ENCODE measurements at regions of chr16 and their contacts with region 1.

Region 1: DNA sequence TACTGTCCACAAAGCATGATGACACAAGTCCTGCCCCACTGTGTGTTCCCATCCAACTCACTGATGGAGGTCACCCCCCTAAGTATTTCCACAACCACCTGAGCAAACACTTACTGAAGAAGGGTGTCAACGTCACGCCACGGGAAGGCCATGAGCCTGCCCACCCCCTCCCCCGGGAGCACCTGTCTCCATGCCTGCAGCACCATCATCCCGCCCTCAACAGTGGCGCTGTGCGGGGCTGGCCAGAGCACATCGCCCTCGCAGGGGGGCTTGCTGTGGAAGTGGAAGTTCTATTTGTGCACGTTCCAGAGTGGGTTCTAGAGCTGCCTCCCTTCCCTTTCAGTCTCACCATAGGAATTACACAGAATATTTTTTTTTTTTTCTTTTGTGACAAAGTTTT is 4.3 kb upstream of the MBTPS1 start:
- DNase-seq: no peak
- ATAC-seq: no peak
- H3K4me3 ChIP-seq: no peak overlapping the region
- H3K27ac ChIP-seq: no peak overlapping the region
- H3K4me1 ChIP-seq: peaks cover 4% of the 10 kb centered on the region
- H3K27me3 ChIP-seq: no peaks in the 10 kb centered on the region
- CTCF ChIP-seq: no peak

Region 2: DNA sequence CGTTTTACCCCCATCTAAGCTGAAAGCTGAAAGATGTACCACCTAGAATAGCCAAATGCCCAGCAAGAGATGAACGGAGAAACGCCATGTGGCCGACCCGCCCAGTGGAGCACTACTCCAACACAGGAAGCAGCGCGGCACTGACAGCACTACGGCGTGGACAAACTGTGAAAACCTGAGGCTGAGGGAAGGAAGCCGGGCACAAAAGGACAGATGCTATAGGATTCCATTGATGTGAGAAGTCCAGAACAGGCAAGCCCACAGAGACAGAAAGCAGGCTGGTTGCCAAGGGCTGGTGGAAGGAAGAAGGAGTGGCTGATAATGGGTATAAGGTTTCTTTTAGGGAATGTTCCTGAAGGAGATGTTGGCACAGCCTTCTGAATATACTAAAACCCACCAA is 49.0 kb before region 1 on chr16:
- intact Hi-C with region 1: no loop called
- DNase-seq: no peak
- ATAC-seq: peak in 1 of 4 donors; percentile 18
- H3K4me3 ChIP-seq: no peak overlapping the region
- H3K27ac ChIP-seq: no peak overlapping the region
- H3K4me1 ChIP-seq: no peaks in the 10 kb centered on the region
- H3K27me3 ChIP-seq: no peaks in the 10 kb centered on the region
- CTCF ChIP-seq: no peak

Region 3: DNA sequence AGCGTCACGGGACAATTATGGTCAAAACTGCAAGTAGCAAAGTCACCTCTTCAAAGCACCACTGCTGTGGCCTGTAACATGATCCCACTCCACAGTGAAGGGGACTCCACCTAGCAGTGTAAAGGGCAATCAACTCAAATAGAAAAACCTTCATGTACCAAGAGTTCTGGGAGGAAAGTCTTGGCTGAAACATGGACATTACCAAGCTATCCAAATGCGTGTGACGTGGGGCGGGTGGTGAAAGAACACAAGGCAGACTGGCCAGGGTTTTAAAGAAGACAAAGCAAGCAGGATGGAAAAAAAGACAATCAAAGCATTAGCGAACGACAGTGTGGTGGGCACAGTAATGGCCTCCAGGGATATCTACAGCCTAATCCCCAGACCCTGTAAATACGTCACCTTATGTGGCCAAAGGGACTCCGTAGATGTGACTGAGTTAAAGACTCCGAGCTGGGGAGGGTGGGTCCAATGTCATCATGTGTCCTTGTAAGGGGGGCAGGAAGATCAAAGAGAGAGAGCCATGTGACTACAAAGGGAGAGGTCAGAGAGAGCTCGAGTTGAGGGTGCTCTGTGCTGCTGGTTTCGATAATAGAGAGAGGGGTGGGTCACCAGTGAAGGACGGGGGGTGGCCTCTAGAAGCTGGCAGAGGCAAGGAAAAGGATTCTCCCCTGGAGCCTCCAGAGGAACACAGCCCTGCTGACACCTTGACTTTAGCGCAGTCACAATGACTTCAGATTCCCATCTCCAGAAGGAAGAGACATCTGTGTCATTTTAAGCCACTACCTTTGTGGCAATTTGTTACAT is 18.0 kb after region 1 on chr16:
- intact Hi-C with region 1: loop called in 1 of 2 experiments (anchors 2 kb)
- DNase-seq: peak; percentile 42 to 71
- ATAC-seq: peak; percentile 85 to 94 (median 92)
- H3K4me3 ChIP-seq: peak overlapping the region; percentile 61
- H3K27ac ChIP-seq: peak overlapping the region; percentile 87
- H3K4me1 ChIP-seq: peaks cover 33% of the 10 kb centered on the region
- H3K27me3 ChIP-seq: no peaks in the 10 kb centered on the region
- CTCF ChIP-seq: no peak

Measured in psoas muscle (tissue), 8 donors.